HepG2 (cell line): ENCODE measurements at regions of chr2 and their contacts with region 1.

Region 1: DNA sequence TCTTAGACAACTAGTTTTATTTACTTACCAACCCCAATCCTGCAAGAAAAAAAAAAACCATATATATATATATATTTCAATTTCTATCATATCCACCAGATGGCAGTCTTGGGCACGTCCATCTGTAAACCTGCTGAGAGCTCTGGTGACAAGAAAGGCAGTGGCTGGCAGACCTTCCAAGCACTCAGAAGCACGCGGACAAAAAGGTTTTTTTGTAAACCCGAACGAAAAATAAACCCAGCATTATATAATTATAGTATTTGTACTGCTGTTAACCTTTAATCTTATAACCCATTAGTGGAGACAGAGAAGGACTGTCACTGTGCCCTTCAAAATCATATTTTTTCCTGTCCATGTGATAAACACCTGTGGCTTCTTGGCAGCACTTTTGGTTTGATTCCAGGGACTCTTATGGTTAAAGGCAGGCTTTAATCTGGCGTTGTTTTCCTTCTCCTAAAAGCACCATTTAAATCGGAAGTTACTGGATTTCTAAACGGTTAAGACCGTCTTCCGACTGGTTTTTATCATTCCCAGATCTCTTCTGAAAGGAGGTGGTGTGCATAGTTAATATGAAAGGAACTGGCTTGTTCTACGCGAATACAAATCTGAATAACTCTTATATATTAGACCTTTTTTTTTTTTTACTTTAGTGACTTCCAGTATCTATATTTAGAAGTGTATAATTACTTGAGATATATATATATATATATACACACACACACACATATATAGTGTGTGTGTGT is 31.0 kb upstream of the SLC3A1 start:
- DNase-seq: peak; percentile 77
- ATAC-seq: peak; percentile 75
- H3K4me3 ChIP-seq: peak overlapping the region in 2 of 3 experiments; percentile 29 to 45; a peak in 3 of 6 replicates
- H3K27ac ChIP-seq: no peak overlapping the region
- H3K4me1 ChIP-seq: peaks cover 21% of the 10 kb centered on the region
- H3K27me3 ChIP-seq: no peaks in the 10 kb centered on the region
- CTCF ChIP-seq: peak; percentile 57
- EP300 ChIP-seq: no peak
- POLR2A ChIP-seq: no peak
- RAD21 ChIP-seq: 0 out of 2 replicates have a peak, but pooled peaks have one; percentile 25

Region 2: DNA sequence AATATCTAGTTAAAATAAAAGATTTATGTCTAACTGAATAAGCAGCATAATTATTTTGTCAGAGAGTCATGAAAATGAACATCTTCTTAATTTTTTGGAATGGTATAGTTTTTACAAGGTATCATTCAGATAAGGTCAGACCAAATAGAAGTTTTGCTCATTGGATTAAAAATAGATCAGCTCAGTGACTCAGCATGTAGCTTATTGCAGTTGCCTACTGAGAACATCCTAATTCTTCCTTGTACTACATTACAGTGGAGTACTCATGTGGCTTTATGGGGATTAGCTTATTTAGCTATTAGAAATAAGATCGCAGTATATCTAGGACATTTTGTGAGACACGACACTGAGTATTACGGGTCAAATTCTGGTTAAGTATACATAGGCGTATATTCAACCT is 113.9 kb before region 1 on chr2:
- CTCF ChIA-PET with region 1: no interaction called
- POLR2A ChIA-PET with region 1: no interaction called
- in situ Hi-C with region 1: no loop called
- intact Hi-C with region 1: no loop called
- DNase-seq: no peak
- ATAC-seq: no peak
- H3K4me3 ChIP-seq: no peak overlapping the region
- H3K27ac ChIP-seq: no peak overlapping the region
- H3K4me1 ChIP-seq: no peaks in the 10 kb centered on the region
- H3K27me3 ChIP-seq: no peaks in the 10 kb centered on the region
- CTCF ChIP-seq: no peak
- EP300 ChIP-seq: no peak
- POLR2A ChIP-seq: no peak
- RAD21 ChIP-seq: no peak

Region 3: DNA sequence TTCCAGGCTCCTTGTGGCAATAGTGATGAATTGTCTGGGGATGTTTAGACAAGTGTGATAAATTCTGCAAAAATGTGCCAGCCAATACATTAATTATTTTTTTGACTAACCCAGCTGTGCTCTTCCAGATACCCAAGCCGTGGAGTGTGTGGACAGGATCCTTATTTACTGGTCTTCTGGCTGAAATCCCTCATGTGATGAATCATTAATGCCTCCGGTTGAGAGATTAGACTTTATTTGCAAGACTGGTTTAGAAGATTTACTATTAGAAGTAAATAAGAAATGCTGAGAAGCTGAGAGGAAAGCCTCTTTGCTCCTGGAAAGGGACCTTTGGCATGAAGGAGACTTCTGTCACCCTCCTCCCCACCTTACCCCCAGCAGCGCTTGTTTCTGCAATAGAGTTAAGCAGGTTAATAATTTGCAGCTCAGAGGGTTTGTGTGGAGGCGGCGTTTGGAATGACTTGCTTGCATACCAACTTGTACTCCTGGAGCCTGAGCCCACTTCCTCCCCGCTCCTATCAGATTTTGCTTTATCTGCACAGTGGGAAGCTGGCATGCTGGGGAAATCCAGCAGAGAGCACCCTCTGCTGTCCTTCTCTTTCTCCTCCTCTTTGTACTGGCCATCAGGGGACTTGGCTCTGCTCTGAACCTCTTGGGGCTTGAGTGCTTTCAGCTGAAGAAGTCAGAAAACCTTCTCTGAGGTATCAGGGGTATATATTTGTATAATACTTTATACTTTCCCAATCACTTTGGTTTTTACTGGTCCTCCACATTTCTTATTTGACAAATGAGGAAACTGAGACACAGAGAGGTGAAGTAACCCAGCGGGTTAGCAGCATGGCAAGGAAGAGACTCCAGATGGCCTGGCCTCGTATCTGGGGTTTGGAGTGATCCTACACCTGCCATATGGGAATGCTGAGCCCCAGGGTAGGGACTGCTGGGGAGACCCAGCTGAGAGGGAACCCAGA is 47.3 kb after region 1 on chr2:
- CTCF ChIA-PET with region 1: interaction called, 44 read pairs
- POLR2A ChIA-PET with region 1: interaction called, 3 read pairs
- in situ Hi-C with region 1: loop called (anchors 5 kb)
- intact Hi-C with region 1: loop called (anchors 1 kb)
- DNase-seq: peak; percentile 95
- ATAC-seq: peak; percentile 98
- H3K4me3 ChIP-seq: peak overlapping the region in 2 of 3 experiments; percentile 12 to 13; a peak in 1 of 6 replicates
- H3K27ac ChIP-seq: no peak overlapping the region
- H3K4me1 ChIP-seq: peaks cover 64% of the 10 kb centered on the region
- H3K27me3 ChIP-seq: peaks cover 2 to 6% of the 10 kb centered on the region in 2 experiments; a peak in 2 of 5 replicates
- CTCF ChIP-seq: peak; percentile 94
- EP300 ChIP-seq: peak in 1 of 2 experiments; percentile 46; a peak in 1 of 4 replicates
- POLR2A ChIP-seq: no peak
- RAD21 ChIP-seq: peak; percentile 95

Region 4: DNA sequence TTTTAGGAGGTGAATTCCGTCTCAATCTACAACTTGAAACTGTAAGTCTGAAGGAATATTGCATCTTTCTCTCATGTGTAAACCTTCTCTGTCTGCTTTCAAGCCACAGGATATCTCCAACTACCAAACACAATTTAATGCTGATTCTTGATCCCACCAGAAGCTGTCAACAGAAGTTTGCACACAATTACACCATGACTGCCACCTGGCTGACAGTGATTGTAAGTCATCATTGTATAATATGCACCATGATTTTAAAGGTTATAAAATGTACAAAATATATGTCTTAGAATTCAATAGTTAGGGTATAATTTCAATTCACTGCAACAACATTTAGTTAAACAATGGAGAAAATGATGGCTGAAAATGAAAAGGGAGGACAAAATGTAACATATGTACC is 98.6 kb after region 1 on chr2:
- CTCF ChIA-PET with region 1: interaction called, 13 read pairs
- POLR2A ChIA-PET with region 1: no interaction called
- in situ Hi-C with region 1: no loop called
- intact Hi-C with region 1: loop called (anchors 1 kb)
- DNase-seq: peak; percentile 51
- ATAC-seq: peak; percentile 68
- H3K4me3 ChIP-seq: no peak overlapping the region
- H3K27ac ChIP-seq: no peak overlapping the region
- H3K4me1 ChIP-seq: no peaks in the 10 kb centered on the region
- H3K27me3 ChIP-seq: no peaks in the 10 kb centered on the region
- CTCF ChIP-seq: peak; percentile 65
- EP300 ChIP-seq: no peak
- POLR2A ChIP-seq: no peak
- RAD21 ChIP-seq: peak; percentile 49; the same call in 1 of the 2 replicates